Dendritic cell treated with granulocyte-macrophage colony-stimulating factor and Interleukin-4, amounts not matched to agents 40 ng/mL and 50 ng/mL, for 4 days (primary cell): ENCODE measurements at regions of chr5 and their contacts with region 1.

Region 1: DNA sequence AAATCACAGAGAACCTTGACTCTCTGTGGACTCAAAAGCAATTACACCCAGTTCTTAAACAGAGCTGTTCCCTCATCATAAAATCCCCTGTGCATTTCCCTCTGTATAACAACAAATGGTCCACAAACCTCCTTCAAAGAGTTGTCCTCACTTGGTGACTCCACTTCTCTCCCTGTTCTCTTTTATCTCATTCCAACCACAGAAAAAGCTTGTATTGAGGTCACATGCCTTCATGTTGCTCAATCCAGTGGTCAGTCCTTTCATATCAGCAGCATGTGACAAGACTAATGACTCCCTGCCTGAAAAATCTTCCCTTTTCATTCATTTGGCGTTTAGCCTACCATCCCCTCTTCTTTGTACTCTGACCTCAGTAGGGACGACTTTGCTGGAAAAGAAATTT is 158.0 kb downstream of the DEPDC1B start:
- H3K4me3 Mint-ChIP-seq: peak overlapping the region; percentile 2
- H3K27ac Mint-ChIP-seq: peak overlapping the region; percentile 11
- H3K4me1 Mint-ChIP-seq: peaks cover 58% of the 10 kb centered on the region
- H3K27me3 Mint-ChIP-seq: peaks cover 20% of the 10 kb centered on the region

Region 2: DNA sequence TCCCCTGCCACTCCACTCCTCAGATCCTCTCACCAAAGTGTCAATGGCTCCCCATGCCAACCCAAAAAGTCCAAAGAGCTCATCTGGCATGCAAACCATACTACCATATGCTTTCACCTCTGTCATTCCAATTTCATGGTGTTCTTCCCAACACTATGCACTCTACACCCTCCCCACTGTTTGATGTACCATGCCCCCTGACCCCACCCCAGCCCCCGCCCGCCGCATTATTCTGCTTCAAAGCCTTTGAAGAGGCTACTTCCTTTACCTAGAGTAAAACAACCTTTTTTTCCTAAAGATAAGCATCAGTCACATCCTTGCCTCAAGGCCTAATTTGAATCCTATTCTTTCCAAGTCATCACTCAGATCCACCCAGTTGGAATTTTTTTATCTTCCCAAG is 68.3 kb before region 1 on chr5:
- intact Hi-C with region 1: no loop called
- H3K4me3 Mint-ChIP-seq: no peak overlapping the region
- H3K27ac Mint-ChIP-seq: no peak overlapping the region
- H3K4me1 Mint-ChIP-seq: no peaks in the 10 kb centered on the region
- H3K27me3 Mint-ChIP-seq: peaks cover 1% of the 10 kb centered on the region

Region 3: GRCh38 chr5:60487885-60488442 is 54.0 kb before region 1 on chr5:
- intact Hi-C with region 1: no loop called
- H3K4me3 Mint-ChIP-seq: no peak overlapping the region
- H3K27ac Mint-ChIP-seq: no peak overlapping the region
- H3K4me1 Mint-ChIP-seq: no peaks in the 10 kb centered on the region
- H3K27me3 Mint-ChIP-seq: no peaks in the 10 kb centered on the region

Region 4: DNA sequence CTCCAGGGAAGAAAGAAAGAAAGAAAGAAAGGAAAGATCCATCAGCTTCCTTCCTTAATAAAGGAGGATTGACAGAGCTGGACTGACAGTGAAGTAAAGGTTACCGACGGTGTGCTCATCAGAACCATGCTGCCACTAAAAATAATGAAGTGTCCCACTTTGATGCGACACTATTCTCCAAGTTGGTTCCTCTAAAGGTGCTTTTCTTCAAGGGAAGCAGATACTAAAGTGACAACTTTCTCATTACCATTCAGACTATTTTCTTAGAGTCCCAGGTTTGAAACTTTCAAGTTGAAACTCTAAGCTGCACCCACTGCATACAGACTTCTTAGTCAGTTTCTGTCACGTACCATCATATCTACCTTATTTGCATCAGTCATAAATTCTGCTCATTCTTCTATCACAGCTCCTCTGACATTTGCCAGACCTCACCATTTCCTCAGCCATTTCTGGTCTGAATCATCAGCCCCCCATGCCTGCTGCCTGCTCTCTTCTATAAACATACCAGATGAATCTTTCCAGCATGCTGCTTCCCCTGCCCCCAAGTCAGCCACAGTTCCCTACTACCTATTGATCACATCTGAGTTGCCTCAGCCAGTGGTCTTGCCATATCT is 19.6 kb before region 1 on chr5:
- intact Hi-C with region 1: loop called (anchors 2 kb)
- H3K4me3 Mint-ChIP-seq: no peak overlapping the region
- H3K27ac Mint-ChIP-seq: no peak overlapping the region
- H3K4me1 Mint-ChIP-seq: no peaks in the 10 kb centered on the region
- H3K27me3 Mint-ChIP-seq: no peaks in the 10 kb centered on the region

Region 5: DNA sequence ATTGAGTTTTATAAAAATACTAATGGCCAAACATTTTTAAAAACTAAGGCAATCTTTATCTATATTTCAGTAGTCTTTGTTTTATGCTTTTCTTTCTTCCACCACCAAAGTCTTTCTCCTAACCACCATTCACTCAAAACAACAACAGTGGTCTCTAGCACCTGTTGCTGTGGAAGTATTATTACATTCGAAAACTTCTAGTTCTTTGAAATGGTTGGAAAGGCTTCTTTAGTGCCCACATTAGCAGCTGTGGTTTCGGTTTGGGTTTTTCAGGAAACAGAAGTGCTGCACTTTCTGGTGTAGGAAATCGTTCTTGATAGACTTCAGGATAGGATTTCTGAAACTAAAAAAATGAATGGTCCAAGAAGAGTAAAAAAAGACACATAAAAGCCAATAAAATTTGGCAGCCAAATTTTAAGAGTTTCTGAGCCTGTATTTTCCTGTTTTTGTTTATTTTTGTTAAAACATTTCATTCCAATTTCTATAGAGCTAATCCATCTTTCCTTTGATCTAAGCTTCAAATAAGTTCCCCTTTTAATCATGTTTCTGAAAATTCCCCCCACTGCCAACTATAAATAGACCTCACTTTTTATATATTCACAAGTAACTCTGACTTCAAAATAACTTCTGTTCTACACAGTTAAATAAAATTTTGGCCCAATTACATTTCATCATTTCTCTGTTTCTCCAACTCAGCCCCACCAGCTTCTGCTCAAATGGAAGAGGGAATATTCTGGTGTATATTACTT is 55.8 kb after region 1 on chr5:
- intact Hi-C with region 1: no loop called
- H3K4me3 Mint-ChIP-seq: peak overlapping the region; percentile 35
- H3K27ac Mint-ChIP-seq: peak overlapping the region; percentile 74
- H3K4me1 Mint-ChIP-seq: peaks cover 21% of the 10 kb centered on the region
- H3K27me3 Mint-ChIP-seq: no peaks in the 10 kb centered on the region